T-cell (primary cell): ENCODE measurements at regions of chr1 and their contacts with region 1.

Region 1: DNA sequence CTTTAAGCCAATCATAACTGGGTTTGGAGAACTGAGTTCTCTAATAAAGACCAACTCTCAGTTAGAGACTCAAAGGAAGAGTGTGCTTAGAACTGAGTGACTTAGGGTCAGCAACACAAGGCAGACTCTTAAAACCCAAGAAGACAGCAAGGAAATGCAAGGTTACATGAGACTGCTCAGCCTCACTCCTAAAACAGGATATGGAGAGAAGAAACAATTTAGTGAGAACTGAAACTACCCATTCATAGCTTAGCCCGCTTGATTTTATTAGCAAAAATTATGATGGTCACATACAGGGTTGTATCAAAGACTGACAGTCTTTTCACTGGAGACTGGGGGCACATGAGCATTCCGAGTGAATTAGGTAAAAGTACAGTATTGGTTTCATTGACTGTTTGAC is 78.9 kb upstream of the DMRTA2 start:
- DNase-seq: no peak
- ATAC-seq: no peak
- H3K4me3 ChIP-seq: no peak overlapping the region
- H3K4me3 Mint-ChIP-seq: no peak overlapping the region
- H3K27ac ChIP-seq: no peak overlapping the region
- H3K27ac Mint-ChIP-seq: no peak overlapping the region
- H3K4me1 ChIP-seq: no peaks in the 10 kb centered on the region
- H3K4me1 Mint-ChIP-seq: no peaks in the 10 kb centered on the region
- H3K27me3 ChIP-seq: no peaks in the 10 kb centered on the region
- H3K27me3 Mint-ChIP-seq: no peaks in the 10 kb centered on the region

Region 2: DNA sequence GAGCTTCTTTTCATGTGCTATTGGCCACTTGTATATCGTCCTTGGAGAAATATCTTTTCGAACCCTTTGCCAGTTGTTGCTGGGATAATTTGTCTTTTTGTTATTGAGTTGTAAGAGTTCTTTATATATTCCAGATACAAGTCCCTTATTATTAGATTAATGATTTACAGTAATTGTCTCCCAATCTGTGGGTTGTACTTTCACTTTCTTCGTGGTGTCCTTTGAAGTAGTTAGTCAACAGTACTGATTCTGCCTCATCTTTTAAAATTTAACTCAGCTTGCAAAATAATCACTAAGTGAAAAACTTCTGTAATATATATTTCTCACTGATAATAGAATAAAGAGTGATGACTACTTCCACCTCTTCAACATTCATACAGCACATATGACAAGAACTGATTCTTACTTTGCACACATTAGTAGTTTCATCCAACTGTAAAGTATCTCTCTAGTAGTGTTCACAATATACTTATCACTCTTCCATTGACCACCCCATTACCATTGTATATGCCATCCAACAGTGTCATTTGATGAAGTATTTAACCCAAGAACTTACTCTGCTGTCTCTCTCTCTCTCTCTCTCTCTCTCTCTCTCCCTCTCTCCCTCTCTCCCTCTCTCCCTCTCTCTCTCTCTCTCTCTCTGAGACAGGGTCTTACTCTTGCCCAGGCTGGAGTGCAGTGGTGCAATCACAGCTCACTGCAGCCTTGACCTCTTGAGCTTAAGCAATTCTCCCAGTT is 25.3 kb after region 1 on chr1:
- CTCF ChIA-PET with region 1: no interaction called
- POLR2A ChIA-PET with region 1: no interaction called
- DNase-seq: no peak
- ATAC-seq: no peak
- H3K4me3 ChIP-seq: no peak overlapping the region
- H3K4me3 Mint-ChIP-seq: no peak overlapping the region
- H3K27ac ChIP-seq: no peak overlapping the region
- H3K27ac Mint-ChIP-seq: no peak overlapping the region
- H3K4me1 ChIP-seq: no peaks in the 10 kb centered on the region
- H3K4me1 Mint-ChIP-seq: no peaks in the 10 kb centered on the region
- H3K27me3 ChIP-seq: no peaks in the 10 kb centered on the region
- H3K27me3 Mint-ChIP-seq: no peaks in the 10 kb centered on the region

Region 3: GRCh38 chr1:50644447-50645105 is 142.4 kb after region 1 on chr1:
- CTCF ChIA-PET with region 1: no interaction called
- POLR2A ChIA-PET with region 1: interaction called in 1 of 2 experiments, 10 read pairs
- DNase-seq: no peak
- ATAC-seq: no peak
- H3K4me3 ChIP-seq: no peak overlapping the region
- H3K4me3 Mint-ChIP-seq: no peak overlapping the region
- H3K27ac ChIP-seq: no peak overlapping the region
- H3K27ac Mint-ChIP-seq: no peak overlapping the region
- H3K4me1 ChIP-seq: no peaks in the 10 kb centered on the region
- H3K4me1 Mint-ChIP-seq: no peaks in the 10 kb centered on the region
- H3K27me3 ChIP-seq: no peaks in the 10 kb centered on the region
- H3K27me3 Mint-ChIP-seq: no peaks in the 10 kb centered on the region